Left ventricle myocardium superior (tissue), 1 donor: ENCODE measurements at regions of chr3 and their contacts with region 1.

Region 1: GRCh38 chr3:16048435-16049318 is 125.8 kb upstream of the GALNT15 start:
- DNase-seq: no peak
- ATAC-seq: peak; percentile 90

Region 2: DNA sequence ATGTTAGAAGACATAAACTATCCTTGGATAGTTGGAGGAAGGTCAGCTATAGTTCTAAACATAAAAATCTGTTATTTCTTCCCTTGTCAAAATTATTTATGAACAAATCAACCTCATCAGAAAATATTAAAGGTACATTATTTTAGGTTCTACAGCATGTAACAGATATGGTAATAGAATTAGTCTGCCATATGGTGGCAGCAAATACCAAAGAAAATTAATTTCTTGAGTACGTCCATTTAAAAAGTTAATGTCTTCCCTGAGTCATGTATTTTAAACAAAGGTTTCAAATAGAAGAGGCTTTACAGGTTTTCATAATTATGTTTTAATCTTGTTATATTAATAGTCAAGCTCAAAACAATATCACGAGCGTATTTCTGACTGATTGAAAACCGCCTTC is 233.0 kb before region 1 on chr3:
- intact Hi-C with region 1: loop called (anchors 5 kb)
- DNase-seq: no peak
- ATAC-seq: peak; percentile 66

Region 3: GRCh38 chr3:16102905-16103364 is 54.3 kb after region 1 on chr3:
- intact Hi-C with region 1: no loop called
- DNase-seq: no peak
- ATAC-seq: peak; percentile 62

Region 4: GRCh38 chr3:16177962-16178627 is 129.4 kb after region 1 on chr3:
- intact Hi-C with region 1: loop called (anchors 5 kb)
- DNase-seq: peak; percentile 92
- ATAC-seq: peak; percentile 72

Region 5: GRCh38 chr3:16247276-16248061 is 198.8 kb after region 1 on chr3:
- intact Hi-C with region 1: loop called (anchors 5 kb)
- DNase-seq: peak; percentile 77
- ATAC-seq: peak; percentile 56